ENCODE measurements at regions of chr11 and their contacts with region 1.

Region 1: DNA sequence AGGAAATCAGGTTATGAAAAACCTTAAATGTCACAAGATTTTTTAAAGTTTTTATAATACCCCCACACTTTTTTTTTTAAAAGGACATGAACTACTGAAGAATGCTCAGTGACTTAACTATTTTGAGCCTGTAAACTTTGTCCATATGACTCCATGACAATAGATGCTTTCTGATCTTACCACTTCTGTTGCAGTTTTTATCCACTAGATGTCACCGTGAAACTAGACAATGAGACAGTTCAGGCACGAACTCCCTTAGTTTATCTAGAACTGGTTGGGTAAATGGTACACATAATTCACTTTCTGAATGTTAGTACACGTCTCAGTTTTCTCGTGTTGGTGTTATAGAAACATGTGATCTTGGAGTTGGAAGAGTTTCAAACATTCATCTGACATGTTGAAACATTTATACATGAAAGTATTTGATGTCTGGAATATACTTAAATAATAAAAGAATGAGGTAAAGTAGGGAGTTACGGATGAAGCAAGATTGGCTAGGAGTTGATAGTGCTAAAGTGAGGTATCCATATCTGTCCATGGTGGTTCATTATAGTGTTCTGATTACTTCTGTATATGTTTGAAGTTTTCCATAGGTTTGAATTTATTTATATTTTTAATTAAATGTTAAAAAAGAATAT is 8.1 kb downstream of the CCDC15 start:
- DNase-seq: no peak
- H3K4me3 Mint-ChIP-seq: no peak overlapping the region
- H3K27ac Mint-ChIP-seq: no peak overlapping the region
- H3K4me1 Mint-ChIP-seq: peaks cover 7% of the 10 kb centered on the region
- H3K27me3 Mint-ChIP-seq: no peaks in the 10 kb centered on the region

Region 2: DNA sequence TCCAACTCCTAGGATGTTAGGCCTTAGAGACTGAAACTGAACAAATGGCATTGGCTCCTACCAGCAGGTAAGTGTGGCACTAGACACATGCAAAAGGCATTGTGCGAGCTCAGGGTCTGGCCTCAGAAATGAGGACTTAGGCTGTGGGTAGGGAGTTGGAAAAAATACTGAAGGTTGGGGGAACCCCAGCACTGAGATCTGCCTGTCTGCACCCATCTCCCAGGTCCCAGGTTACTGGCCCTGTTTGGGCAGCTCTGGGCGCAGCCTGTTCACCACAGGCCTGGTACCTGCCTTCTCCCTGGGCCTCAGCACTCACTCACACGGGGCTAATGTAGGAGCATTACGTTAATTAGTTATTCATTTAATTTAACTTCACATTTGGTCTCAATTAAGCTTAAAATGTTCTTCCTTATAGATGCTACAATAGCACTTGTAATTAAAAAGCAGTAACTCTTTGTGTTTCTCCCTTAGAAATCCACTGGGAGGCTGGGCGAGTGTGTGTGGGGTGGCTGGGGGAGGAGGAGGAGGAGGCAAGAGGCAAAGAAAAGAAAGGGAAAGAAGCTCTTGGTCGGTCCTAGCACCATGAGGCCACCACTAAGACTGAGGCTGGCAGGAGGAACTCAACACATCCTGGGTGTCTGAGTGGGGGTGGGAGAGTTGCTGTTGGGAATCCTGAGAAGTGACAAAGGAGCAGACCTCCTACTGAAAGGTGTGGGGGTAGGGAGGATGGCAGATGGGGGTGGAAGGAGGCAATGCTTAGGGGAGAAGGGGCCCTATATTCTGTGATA is 130.0 kb after region 1 on chr11:
- intact Hi-C with region 1: no loop called
- DNase-seq: no peak
- H3K4me3 Mint-ChIP-seq: no peak overlapping the region
- H3K27ac Mint-ChIP-seq: no peak overlapping the region
- H3K4me1 Mint-ChIP-seq: peaks cover 3% of the 10 kb centered on the region
- H3K27me3 Mint-ChIP-seq: no peaks in the 10 kb centered on the region

Region 3: GRCh38 chr11:125111343-125112207 is 149.5 kb after region 1 on chr11 and contains the start of gene TMEM218:
- intact Hi-C with region 1: no loop called
- DNase-seq: peak; percentile 97
- H3K4me3 Mint-ChIP-seq: peak within 1 kb of the TSS; percentile 100
- H3K27ac Mint-ChIP-seq: peak within 1 kb of the TSS; percentile 100
- H3K4me1 Mint-ChIP-seq: peaks cover 22% of the 10 kb centered on the region
- H3K27me3 Mint-ChIP-seq: peaks cover 6% of the 10 kb centered on the region
- total RNA-seq, gene TMEM218: 17.9 and 18.1 TPM in 2 replicates

Region 4: GRCh38 chr11:125345421-125346178 is 383.5 kb after region 1 on chr11:
- intact Hi-C with region 1: loop called (anchors 1 kb)
- DNase-seq: peak; percentile 13
- H3K4me3 Mint-ChIP-seq: no peak overlapping the region
- H3K27ac Mint-ChIP-seq: no peak overlapping the region
- H3K4me1 Mint-ChIP-seq: no peaks in the 10 kb centered on the region
- H3K27me3 Mint-ChIP-seq: peaks cover 3% of the 10 kb centered on the region

Measured in activated T-helper 2 cell treated with anti-CD3 and anti-CD28 coated beads, Interferon-gamma antibody, Interleukin-2, Interleukin-4, amounts not matched to agents 10 μg/mL and 5 μg/mL and 100 μg/mL, durations not matched to agents 14 hours and 24 hours and 36 hours (primary cell).